Esophagus muscularis mucosa (tissue), 4 donors: ENCODE measurements at regions of chr7 and their contacts with region 1.

Region 1: DNA sequence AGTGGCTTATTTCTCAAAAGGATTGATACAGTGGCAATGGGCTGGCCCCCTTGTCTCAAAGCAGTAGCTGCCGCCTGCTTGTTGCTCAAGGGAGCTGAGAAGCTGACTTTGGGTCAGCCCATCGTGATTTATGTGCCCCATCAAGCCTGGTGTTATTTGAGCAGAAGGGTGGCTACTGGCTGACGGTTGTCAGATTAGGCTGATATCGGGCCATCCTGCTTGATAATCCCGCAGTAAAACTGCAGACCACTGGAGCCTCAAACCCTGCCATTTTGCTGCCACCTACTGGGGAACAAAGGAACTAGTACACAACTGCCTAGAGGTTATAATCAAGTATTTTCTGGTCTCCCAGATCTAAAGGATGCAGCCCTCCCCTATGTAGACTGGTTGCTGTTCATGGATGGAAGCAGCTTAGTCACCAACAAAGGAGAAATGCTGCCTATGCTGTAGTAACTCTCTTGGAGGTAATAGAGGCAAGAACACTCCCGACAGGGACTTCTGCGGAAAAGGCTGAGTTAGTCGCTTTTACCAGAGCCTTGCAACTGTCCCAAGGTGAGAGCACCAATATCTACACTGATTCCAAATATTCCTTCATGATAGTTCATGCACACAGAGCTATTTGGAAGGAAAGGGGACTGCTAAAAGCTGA is 65.9 kb upstream of the ZNF92 start:
- DNase-seq: no peak
- H3K4me3 ChIP-seq: no peak overlapping the region
- H3K27ac ChIP-seq: no peak overlapping the region
- H3K4me1 ChIP-seq: no peaks in the 10 kb centered on the region
- H3K27me3 ChIP-seq: peaks cover 0 to 19% (median 0%) of the 10 kb centered on the region in 4 donors
- CTCF ChIP-seq: peak; percentile 73 to 84 (median 78)
- EP300 ChIP-seq: no peak
- POLR2A ChIP-seq: no peak

Region 2: GRCh38 chr7:64951250-64951848 is 356.4 kb before region 1 on chr7:
- intact Hi-C with region 1: loop called (anchors 10 kb)
- DNase-seq: no peak
- H3K4me3 ChIP-seq: no peak overlapping the region
- H3K27ac ChIP-seq: no peak overlapping the region
- H3K4me1 ChIP-seq: peaks cover 9 to 14% (median 12%) of the 10 kb centered on the region in 4 donors
- H3K27me3 ChIP-seq: peaks cover 0 to 24% (median 17%) of the 10 kb centered on the region in 4 donors
- CTCF ChIP-seq: peak; percentile 81 to 88 (median 83)
- EP300 ChIP-seq: no peak
- POLR2A ChIP-seq: no peak